ENCODE measurements at regions of chr14 and their contacts with region 1.

Region 1: GRCh38 chr14:85280074-85280473 is 249.9 kb upstream of the FLRT2 start:
- DNase-seq: peak in 1 of 2 experiments; percentile 34
- H3K4me3 ChIP-seq: no peak overlapping the region
- H3K27ac ChIP-seq: no peak overlapping the region
- H3K4me1 ChIP-seq: no peaks in the 10 kb centered on the region
- H3K27me3 ChIP-seq: no peaks in the 10 kb centered on the region
- CTCF ChIP-seq: no peak

Region 2: DNA sequence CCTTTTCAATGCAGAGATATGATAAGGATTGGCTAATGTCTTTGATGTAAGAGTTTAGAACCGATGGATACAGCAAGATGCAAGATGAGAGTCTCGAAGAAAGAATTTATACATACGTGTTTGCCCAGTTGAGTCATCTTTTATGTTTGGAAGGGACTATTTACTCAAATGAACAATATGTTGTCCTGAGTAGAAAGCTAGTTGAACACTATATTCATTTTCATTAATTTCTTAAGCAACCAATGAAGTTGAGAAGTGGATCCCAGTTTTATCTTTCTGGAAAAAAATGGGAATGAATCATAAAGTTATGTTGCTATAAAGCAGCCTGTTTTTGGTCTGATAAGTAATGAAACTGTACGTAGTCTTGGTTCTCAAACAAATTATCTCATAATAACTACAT is 1181.8 kb before region 1 on chr14:
- CTCF ChIA-PET with region 1: no interaction called
- POLR2A ChIA-PET with region 1: no interaction called
- intact Hi-C with region 1: no loop called
- DNase-seq: no peak
- H3K4me3 ChIP-seq: no peak overlapping the region
- H3K27ac ChIP-seq: no peak overlapping the region
- H3K4me1 ChIP-seq: no peaks in the 10 kb centered on the region
- H3K27me3 ChIP-seq: no peaks in the 10 kb centered on the region
- CTCF ChIP-seq: no peak

Region 3: GRCh38 chr14:84108746-84109457 is 1171.2 kb before region 1 on chr14:
- CTCF ChIA-PET with region 1: no interaction called
- POLR2A ChIA-PET with region 1: no interaction called
- intact Hi-C with region 1: no loop called
- DNase-seq: no peak
- H3K4me3 ChIP-seq: no peak overlapping the region
- H3K27ac ChIP-seq: no peak overlapping the region
- H3K4me1 ChIP-seq: no peaks in the 10 kb centered on the region
- H3K27me3 ChIP-seq: no peaks in the 10 kb centered on the region
- CTCF ChIP-seq: no peak

Region 4: GRCh38 chr14:84496677-84497076 is 783.4 kb before region 1 on chr14:
- CTCF ChIA-PET with region 1: no interaction called
- POLR2A ChIA-PET with region 1: no interaction called
- intact Hi-C with region 1: no loop called
- DNase-seq: no peak
- H3K4me3 ChIP-seq: no peak overlapping the region
- H3K27ac ChIP-seq: no peak overlapping the region
- H3K4me1 ChIP-seq: no peaks in the 10 kb centered on the region
- H3K27me3 ChIP-seq: no peaks in the 10 kb centered on the region
- CTCF ChIP-seq: no peak

Region 5: DNA sequence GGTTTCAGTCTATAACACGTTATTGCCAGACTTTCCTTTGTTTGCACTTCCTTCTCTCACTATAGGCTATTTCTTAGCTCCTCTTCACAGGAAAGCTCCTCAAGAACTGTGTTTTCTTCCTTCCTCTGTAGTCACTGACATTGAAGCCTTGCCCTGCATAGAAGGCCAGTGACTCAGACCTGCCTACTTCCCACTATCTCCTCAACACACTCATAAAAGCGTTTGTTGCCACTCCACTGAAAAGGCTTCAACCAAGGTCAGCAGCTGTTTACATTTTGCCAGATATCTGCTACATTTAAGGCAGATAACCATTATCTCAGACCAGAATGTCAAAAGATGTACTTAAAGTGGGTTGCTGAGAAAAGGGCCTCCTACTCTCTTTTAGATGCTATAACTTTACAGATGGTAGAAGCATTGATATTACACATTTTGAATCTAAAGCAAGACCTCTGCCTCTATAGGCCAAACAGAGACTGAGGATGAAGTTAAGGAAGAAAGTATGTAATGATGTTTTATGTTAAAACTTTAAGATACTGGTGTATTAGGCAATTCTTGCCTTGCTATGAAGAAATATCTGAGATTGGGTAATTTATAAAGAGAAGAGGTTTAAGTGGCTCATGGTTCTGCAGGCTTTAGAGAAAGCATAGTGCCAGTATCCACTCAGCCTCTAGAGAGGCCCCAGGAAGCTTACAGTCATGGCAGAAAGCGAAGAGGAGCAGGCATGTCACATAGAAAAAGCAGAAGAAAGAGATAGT is 16.6 kb after region 1 on chr14:
- CTCF ChIA-PET with region 1: interaction called, 11 read pairs
- POLR2A ChIA-PET with region 1: no interaction called
- intact Hi-C with region 1: no loop called
- DNase-seq: no peak
- H3K4me3 ChIP-seq: no peak overlapping the region
- H3K27ac ChIP-seq: no peak overlapping the region
- H3K4me1 ChIP-seq: no peaks in the 10 kb centered on the region
- H3K27me3 ChIP-seq: no peaks in the 10 kb centered on the region
- CTCF ChIP-seq: no peak